Caco-2 (cell line): ENCODE measurements at regions of chr1 and their contacts with region 1.

Region 1: GRCh38 chr1:20696397-20697329 is 21.1 kb downstream of the KIF17 start:
- DNase-seq: peak; percentile 90 to 91
- H3K4me3 ChIP-seq: peak overlapping the region; percentile 71
- H3K4me3 Mint-ChIP-seq: peak overlapping the region; percentile 88
- H3K27ac Mint-ChIP-seq: peak overlapping the region; percentile 77
- H3K4me1 ChIP-seq: peaks cover 18% of the 10 kb centered on the region
- H3K4me1 Mint-ChIP-seq: peaks cover 12% of the 10 kb centered on the region
- H3K27me3 ChIP-seq: no peaks in the 10 kb centered on the region
- H3K27me3 Mint-ChIP-seq: no peaks in the 10 kb centered on the region
- CTCF ChIP-seq: peak; percentile 90 to 96

Region 2: GRCh38 chr1:20717452-20718342 is 21.0 kb after region 1 on chr1 and contains the start of gene KIF17:
- CTCF ChIA-PET with region 1: interaction called, 11 read pairs
- POLR2A ChIA-PET with region 1: interaction called, 5 read pairs
- intact Hi-C with region 1: no loop called
- DNase-seq: peak; percentile 70 to 82
- H3K4me3 ChIP-seq: peak within 1 kb of the TSS; percentile 58
- H3K4me3 Mint-ChIP-seq: peak within 1 kb of the TSS; percentile 71
- H3K27ac Mint-ChIP-seq: no peak within 1 kb of the TSS
- H3K4me1 ChIP-seq: peaks cover 11% of the 10 kb centered on the region
- H3K4me1 Mint-ChIP-seq: peaks cover 6% of the 10 kb centered on the region
- H3K27me3 ChIP-seq: no peaks in the 10 kb centered on the region
- H3K27me3 Mint-ChIP-seq: peaks cover 3% of the 10 kb centered on the region
- CTCF ChIP-seq: no peak
- total RNA-seq, gene KIF17: 1.3 and 1.5 TPM in 2 replicates

Region 3: GRCh38 chr1:20732588-20733360 is 36.1 kb after region 1 on chr1 and contains the start of gene SH2D5:
- CTCF ChIA-PET with region 1: interaction called, 4 read pairs
- POLR2A ChIA-PET with region 1: no interaction called
- intact Hi-C with region 1: loop called (anchors 1 kb)
- DNase-seq: peak; percentile 76 to 86
- H3K4me3 ChIP-seq: peak within 1 kb of the TSS; percentile 39
- H3K4me3 Mint-ChIP-seq: peak within 1 kb of the TSS; percentile 95
- H3K27ac Mint-ChIP-seq: peak within 1 kb of the TSS; percentile 55
- H3K4me1 ChIP-seq: peaks cover 6% of the 10 kb centered on the region; the same call in 1 of the 2 replicates
- H3K4me1 Mint-ChIP-seq: peaks cover 13% of the 10 kb centered on the region
- H3K27me3 ChIP-seq: no peaks in the 10 kb centered on the region
- H3K27me3 Mint-ChIP-seq: no peaks in the 10 kb centered on the region
- CTCF ChIP-seq: peak in 1 of 2 experiments; percentile 41
- total RNA-seq, gene SH2D5: 2.8 and 3.5 TPM in 2 replicates

Region 4: GRCh38 chr1:20786253-20787028 is 89.8 kb after region 1 on chr1:
- CTCF ChIA-PET with region 1: interaction called, 6 read pairs
- POLR2A ChIA-PET with region 1: interaction called, 7 read pairs
- intact Hi-C with region 1: loop called (anchors 10 kb)
- DNase-seq: peak; percentile 98
- H3K4me3 ChIP-seq: peak overlapping the region; percentile 99
- H3K4me3 Mint-ChIP-seq: peak overlapping the region; percentile 98
- H3K27ac Mint-ChIP-seq: peak overlapping the region; percentile 95
- H3K4me1 ChIP-seq: peaks cover 5% of the 10 kb centered on the region
- H3K4me1 Mint-ChIP-seq: no peaks in the 10 kb centered on the region
- H3K27me3 ChIP-seq: no peaks in the 10 kb centered on the region
- H3K27me3 Mint-ChIP-seq: no peaks in the 10 kb centered on the region
- CTCF ChIP-seq: no peak

Region 5: DNA sequence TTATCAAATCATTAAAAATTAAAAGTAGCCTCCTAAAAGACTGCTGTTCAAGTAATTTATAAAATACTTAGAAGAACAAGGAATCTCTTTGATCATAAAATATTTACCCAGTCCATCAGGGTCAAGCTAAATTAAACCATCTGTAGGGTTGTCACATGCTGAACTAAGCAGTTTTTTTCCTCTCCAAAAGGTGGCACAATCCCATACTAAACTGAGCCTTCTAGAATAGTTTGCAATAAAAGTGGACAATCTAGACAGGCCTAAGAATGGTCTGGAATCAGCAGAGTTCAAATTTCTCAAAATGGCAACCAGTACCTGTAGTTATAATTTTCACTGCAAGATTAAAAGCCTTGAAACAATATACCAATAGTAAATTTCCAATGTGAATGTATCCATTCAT is 285.3 kb after region 1 on chr1:
- CTCF ChIA-PET with region 1: no interaction called
- POLR2A ChIA-PET with region 1: no interaction called
- intact Hi-C with region 1: loop called (anchors 10 kb)
- DNase-seq: peak in 1 of 2 experiments; percentile 9
- H3K4me3 ChIP-seq: no peak overlapping the region
- H3K4me3 Mint-ChIP-seq: no peak overlapping the region
- H3K27ac Mint-ChIP-seq: no peak overlapping the region
- H3K4me1 ChIP-seq: no peaks in the 10 kb centered on the region
- H3K4me1 Mint-ChIP-seq: no peaks in the 10 kb centered on the region
- H3K27me3 ChIP-seq: no peaks in the 10 kb centered on the region
- H3K27me3 Mint-ChIP-seq: no peaks in the 10 kb centered on the region
- CTCF ChIP-seq: peak in 1 of 2 experiments; percentile 40

Region 6: DNA sequence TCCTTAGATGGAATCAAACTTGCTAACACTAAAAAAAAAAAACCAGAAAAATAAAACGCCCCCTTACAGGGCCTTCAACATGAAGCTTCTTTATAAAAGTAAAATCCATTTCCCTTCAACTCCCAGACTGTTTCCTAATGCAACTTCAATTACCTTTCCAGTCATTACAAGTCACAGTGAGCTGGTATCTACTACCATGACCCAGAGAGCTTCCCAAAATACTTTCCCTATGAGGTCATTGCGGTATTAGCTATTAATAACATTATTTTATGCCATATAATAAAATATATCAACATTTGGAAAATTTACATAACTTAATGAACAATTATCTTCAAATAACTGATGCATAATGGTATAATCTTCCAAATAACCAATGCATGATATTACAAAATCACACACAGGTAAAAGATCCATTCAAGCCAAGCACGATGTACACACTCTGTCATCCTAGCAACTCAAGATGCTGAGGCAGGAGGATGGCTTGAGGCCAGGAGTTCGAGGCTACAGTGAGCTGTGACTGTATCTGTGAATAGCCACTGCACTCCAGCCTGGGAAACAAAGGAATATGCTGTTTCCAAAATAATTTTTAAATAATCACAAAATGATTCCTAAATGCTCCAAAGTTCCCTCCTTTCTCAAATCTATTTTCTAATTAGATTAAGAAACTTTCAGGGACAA is 455.9 kb after region 1 on chr1:
- CTCF ChIA-PET with region 1: no interaction called
- POLR2A ChIA-PET with region 1: no interaction called
- intact Hi-C with region 1: no loop called
- DNase-seq: no peak
- H3K4me3 ChIP-seq: no peak overlapping the region
- H3K4me3 Mint-ChIP-seq: no peak overlapping the region
- H3K27ac Mint-ChIP-seq: no peak overlapping the region
- H3K4me1 ChIP-seq: peaks cover 9% of the 10 kb centered on the region; the same call in 1 of the 2 replicates
- H3K4me1 Mint-ChIP-seq: peaks cover 6% of the 10 kb centered on the region
- H3K27me3 ChIP-seq: no peaks in the 10 kb centered on the region
- H3K27me3 Mint-ChIP-seq: no peaks in the 10 kb centered on the region
- CTCF ChIP-seq: no peak

Region 7: DNA sequence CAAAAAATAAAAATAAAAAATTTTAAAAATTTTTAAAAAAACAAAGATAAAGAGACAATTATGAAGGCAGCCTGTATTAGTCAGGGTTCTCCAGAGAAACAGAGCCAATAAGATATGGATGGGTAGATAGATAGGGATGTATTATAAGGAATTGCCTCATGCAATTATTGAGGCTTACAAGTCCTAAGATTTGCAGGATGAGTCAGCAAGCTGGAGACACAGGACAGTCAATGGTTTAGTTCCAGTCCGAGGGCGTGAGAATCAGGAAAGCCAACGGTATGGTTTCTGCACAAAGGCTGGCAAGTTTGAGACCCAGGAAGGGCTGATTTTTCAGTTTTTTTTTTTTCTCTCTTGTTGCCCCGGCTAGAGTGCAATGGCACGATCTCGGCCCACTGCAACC is 504.1 kb after region 1 on chr1:
- CTCF ChIA-PET with region 1: interaction called, 49 read pairs
- POLR2A ChIA-PET with region 1: no interaction called
- intact Hi-C with region 1: no loop called
- DNase-seq: no peak
- H3K4me3 ChIP-seq: no peak overlapping the region
- H3K4me3 Mint-ChIP-seq: no peak overlapping the region
- H3K27ac Mint-ChIP-seq: no peak overlapping the region
- H3K4me1 ChIP-seq: no peaks in the 10 kb centered on the region
- H3K4me1 Mint-ChIP-seq: no peaks in the 10 kb centered on the region
- H3K27me3 ChIP-seq: no peaks in the 10 kb centered on the region
- H3K27me3 Mint-ChIP-seq: no peaks in the 10 kb centered on the region
- CTCF ChIP-seq: no peak